ENCODE measurements at regions of chr9 and their contacts with region 1.

Region 1: GRCh38 chr9:115353681-115354080 is 235.7 kb upstream of the TNC start:
- DNase-seq: no peak
- H3K4me3 Mint-ChIP-seq: no peak overlapping the region
- H3K27ac Mint-ChIP-seq: no peak overlapping the region
- H3K4me1 Mint-ChIP-seq: no peaks in the 10 kb centered on the region
- H3K27me3 Mint-ChIP-seq: no peaks in the 10 kb centered on the region

Region 2: GRCh38 chr9:115393976-115394775 is 40.5 kb after region 1 on chr9:
- intact Hi-C with region 1: loop called (anchors 1 kb)
- DNase-seq: no peak
- H3K4me3 Mint-ChIP-seq: no peak overlapping the region
- H3K27ac Mint-ChIP-seq: no peak overlapping the region
- H3K4me1 Mint-ChIP-seq: peaks cover 3% of the 10 kb centered on the region
- H3K27me3 Mint-ChIP-seq: no peaks in the 10 kb centered on the region

Region 3: GRCh38 chr9:115404311-115404710 is 50.6 kb after region 1 on chr9:
- intact Hi-C with region 1: no loop called
- DNase-seq: no peak
- H3K4me3 Mint-ChIP-seq: no peak overlapping the region
- H3K27ac Mint-ChIP-seq: no peak overlapping the region
- H3K4me1 Mint-ChIP-seq: no peaks in the 10 kb centered on the region
- H3K27me3 Mint-ChIP-seq: no peaks in the 10 kb centered on the region